ENCODE measurements at regions of chr5 and their contacts with region 1.

Region 1: GRCh38 chr5:119402081-119402480 is 46.3 kb downstream of the TNFAIP8 start:
- DNase-seq: no peak
- H3K4me3 ChIP-seq: no peak overlapping the region
- H3K27ac ChIP-seq: no peak overlapping the region
- H3K4me1 ChIP-seq: no peaks in the 10 kb centered on the region
- H3K27me3 ChIP-seq: no peaks in the 10 kb centered on the region
- CTCF ChIP-seq: no peak

Region 2: GRCh38 chr5:119315516-119315949 is 86.5 kb before region 1 on chr5:
- CTCF ChIA-PET with region 1: no interaction called
- POLR2A ChIA-PET with region 1: interaction called, 11 read pairs
- intact Hi-C with region 1: no loop called
- DNase-seq: no peak
- H3K4me3 ChIP-seq: no peak overlapping the region
- H3K27ac ChIP-seq: no peak overlapping the region
- H3K4me1 ChIP-seq: no peaks in the 10 kb centered on the region
- H3K27me3 ChIP-seq: no peaks in the 10 kb centered on the region
- CTCF ChIP-seq: peak; percentile 46; the same call in 1 of the 2 replicates

Measured in PC-9 (cell line).